ENCODE measurements at regions of chr12 and their contacts with region 1.

Region 1: DNA sequence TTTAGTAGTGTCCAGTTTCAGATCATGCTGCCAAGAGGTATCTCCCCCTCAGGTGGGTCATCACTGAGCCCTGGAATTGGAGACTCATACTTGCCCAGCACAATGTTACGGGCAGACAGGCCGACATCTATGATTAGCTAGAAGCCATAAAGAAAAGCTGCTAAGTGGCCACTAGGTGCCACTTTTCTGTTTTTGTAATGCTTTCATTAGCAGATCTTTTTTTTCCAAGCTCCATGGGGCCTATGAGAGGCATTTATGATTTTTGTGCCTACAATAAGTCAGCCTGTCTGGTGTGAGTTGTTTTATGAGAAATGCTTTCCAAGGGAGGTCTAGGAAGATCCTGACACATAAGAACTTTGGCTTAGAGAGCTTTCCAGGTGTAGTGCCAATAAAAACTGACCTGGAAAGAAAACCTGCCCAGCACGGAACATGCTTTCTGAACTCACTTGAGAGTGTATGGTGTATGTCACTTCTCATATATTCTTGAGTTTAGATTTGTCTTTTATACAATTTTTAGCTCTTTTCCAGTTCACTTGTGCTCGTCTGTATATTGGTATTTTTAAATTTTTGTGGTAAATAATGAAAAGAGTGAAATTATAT is 21.8 kb upstream of the SMCO2 start:
- DNase-seq: no peak
- ATAC-seq: peak; percentile 88 to 95 (median 91)
- H3K4me3 ChIP-seq: no peak overlapping the region
- H3K27ac ChIP-seq: no peak overlapping the region
- H3K4me1 ChIP-seq: no peaks in the 10 kb centered on the region
- H3K27me3 ChIP-seq: no peaks in the 10 kb centered on the region
- CTCF ChIP-seq: peak; percentile 50 to 68 (median 63)
- POLR2A ChIP-seq: no peak

Region 2: GRCh38 chr12:27652174-27652763 is 227.5 kb after region 1 on chr12:
- intact Hi-C with region 1: loop called in 1 of 2 experiments (anchors 10 kb)
- DNase-seq: peak in 1 of 3 donors; percentile 65
- ATAC-seq: peak; percentile 92 to 97 (median 94)
- H3K4me3 ChIP-seq: no peak overlapping the region
- H3K27ac ChIP-seq: no peak overlapping the region
- H3K4me1 ChIP-seq: no peaks in the 10 kb centered on the region
- H3K27me3 ChIP-seq: no peaks in the 10 kb centered on the region
- CTCF ChIP-seq: peak; percentile 79 to 92 (median 90)
- POLR2A ChIP-seq: no peak

Measured in right lobe of liver (tissue), 6 donors.